ENCODE measurements at regions of chr2 and their contacts with region 1.

Region 1: GRCh38 chr2:241355983-241356870 is at the start of gene FARP2:
- DNase-seq: peak; percentile 90
- ATAC-seq: peak; percentile 86
- H3K4me3 ChIP-seq: peak within 1 kb of the TSS; percentile 91
- H3K27ac ChIP-seq: peak within 1 kb of the TSS; percentile 64
- H3K4me1 ChIP-seq: peaks cover 10% of the 10 kb centered on the region
- H3K27me3 ChIP-seq: no peaks in the 10 kb centered on the region
- CTCF ChIP-seq: no peak
- EP300 ChIP-seq: no peak
- POLR2A ChIP-seq: peak; percentile 97
- RAD21 ChIP-seq: 0 out of 2 replicates have a peak, but pooled peaks have one; percentile 10
- polyA plus RNA-seq, gene FARP2: 5.5 to 5.6 TPM

Region 2: DNA sequence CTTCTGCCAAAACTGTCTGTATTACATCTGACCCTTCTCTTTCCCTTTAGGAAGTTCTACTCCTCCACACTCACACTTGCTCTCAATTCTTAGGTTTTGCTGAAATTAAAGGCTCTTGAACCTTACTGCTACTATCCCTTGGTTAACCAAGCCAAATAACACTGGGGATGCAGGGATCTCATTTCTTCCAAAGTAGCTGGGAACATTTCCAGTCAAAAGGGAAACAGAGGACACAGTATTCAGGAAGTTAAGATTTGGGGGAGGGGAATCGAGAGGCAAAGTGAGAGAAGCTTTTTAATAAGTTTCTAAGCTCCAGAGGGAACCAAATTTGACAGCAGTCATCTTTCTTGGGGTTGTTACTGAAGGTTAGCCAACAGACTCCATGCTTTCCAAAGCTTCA is 34.3 kb before region 1 on chr2:
- CTCF ChIA-PET with region 1: interaction called, 13 read pairs
- POLR2A ChIA-PET with region 1: interaction called, 5 read pairs
- RAD21 ChIA-PET with region 1: interaction called, 15 read pairs
- SMC1A ChIA-PET with region 1: interaction called, 9 read pairs
- in situ Hi-C with region 1: no loop called
- intact Hi-C with region 1: no loop called
- DNase-seq: no peak
- ATAC-seq: no peak
- H3K4me3 ChIP-seq: peak overlapping the region; percentile 44
- H3K27ac ChIP-seq: peak overlapping the region; percentile 14; the same call in 1 of the 2 replicates
- H3K4me1 ChIP-seq: peaks cover 29% of the 10 kb centered on the region
- H3K27me3 ChIP-seq: no peaks in the 10 kb centered on the region
- CTCF ChIP-seq: no peak
- EP300 ChIP-seq: no peak
- POLR2A ChIP-seq: no peak
- RAD21 ChIP-seq: no peak

Region 3: DNA sequence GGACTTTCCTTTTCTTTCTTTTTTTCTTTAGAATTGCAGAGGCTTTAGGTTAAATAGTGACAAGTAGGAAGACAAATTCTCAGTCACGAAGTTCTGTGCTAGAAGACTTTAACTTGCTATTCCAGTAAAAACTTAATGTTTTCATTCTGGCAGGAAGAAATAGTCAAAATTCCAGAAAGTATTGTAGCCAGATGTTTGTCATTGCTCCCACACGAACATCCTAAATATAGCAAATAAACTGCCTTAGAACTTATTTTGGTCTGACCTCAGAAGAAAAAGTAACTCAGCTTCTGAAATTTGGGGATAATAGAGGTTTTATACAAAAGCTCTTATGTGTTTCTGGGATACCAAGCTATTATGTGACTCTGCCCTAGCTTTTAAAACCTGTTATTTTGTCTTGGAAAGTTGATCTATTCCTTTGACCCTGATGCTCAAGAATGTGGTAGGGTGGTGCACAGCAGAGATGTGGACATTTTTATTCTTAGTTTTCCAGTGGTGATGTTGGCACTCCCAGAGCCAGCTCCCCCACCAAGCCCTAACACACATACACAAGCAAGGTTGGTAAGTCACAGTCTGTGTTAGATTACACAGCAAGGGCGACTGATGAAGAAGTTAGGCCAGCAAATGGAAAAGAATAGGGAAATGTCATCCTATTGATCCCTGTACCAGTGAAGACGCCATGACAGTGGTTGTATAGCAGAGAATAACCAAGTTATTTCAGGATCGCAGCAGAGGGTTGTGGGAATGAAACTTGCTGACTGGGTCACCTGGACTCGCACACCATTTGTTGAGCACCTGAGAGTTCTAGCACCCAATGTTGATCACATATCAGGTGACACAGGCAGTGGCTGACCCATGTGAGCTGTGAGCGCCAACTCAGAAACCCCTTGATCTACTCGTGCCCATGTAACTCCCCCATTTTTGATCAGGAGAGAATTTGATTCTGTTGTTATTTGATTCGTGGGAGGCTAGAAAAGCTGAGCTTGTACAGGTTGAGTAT is 23.6 kb after region 1 on chr2:
- CTCF ChIA-PET with region 1: interaction called, 57 read pairs
- POLR2A ChIA-PET with region 1: interaction called, 58 read pairs
- RAD21 ChIA-PET with region 1: interaction called, 98 read pairs
- SMC1A ChIA-PET with region 1: interaction called, 239 read pairs
- in situ Hi-C with region 1: no loop called
- intact Hi-C with region 1: loop called (anchors 1 kb)
- DNase-seq: no peak
- ATAC-seq: no peak
- H3K4me3 ChIP-seq: no peak overlapping the region
- H3K27ac ChIP-seq: no peak overlapping the region
- H3K4me1 ChIP-seq: peaks cover 23% of the 10 kb centered on the region
- H3K27me3 ChIP-seq: no peaks in the 10 kb centered on the region
- CTCF ChIP-seq: no peak
- EP300 ChIP-seq: no peak
- POLR2A ChIP-seq: no peak
- RAD21 ChIP-seq: no peak

Region 4: GRCh38 chr2:241508240-241509154 is 152.3 kb after region 1 on chr2 and contains the start of gene STK25:
- CTCF ChIA-PET with region 1: no interaction called
- POLR2A ChIA-PET with region 1: interaction called, 3 read pairs
- RAD21 ChIA-PET with region 1: no interaction called
- SMC1A ChIA-PET with region 1: interaction called, 3 read pairs
- in situ Hi-C with region 1: no loop called
- intact Hi-C with region 1: loop called (anchors 5 kb)
- DNase-seq: peak; percentile 90
- ATAC-seq: peak; percentile 97
- H3K4me3 ChIP-seq: peak within 1 kb of the TSS; percentile 98
- H3K27ac ChIP-seq: peak within 1 kb of the TSS; percentile 64
- H3K4me1 ChIP-seq: peaks cover 16% of the 10 kb centered on the region
- H3K27me3 ChIP-seq: no peaks in the 10 kb centered on the region
- CTCF ChIP-seq: no peak
- EP300 ChIP-seq: peak in 1 of 2 experiments; percentile 20; a peak in 1 of 4 replicates
- POLR2A ChIP-seq: peak; percentile 95
- RAD21 ChIP-seq: no peak
- polyA plus RNA-seq, gene STK25: 6.0 to 14.0 TPM